Esophagus muscularis mucosa (tissue), 4 donors: ENCODE measurements at regions of chr6 and their contacts with region 1.

Region 1: GRCh38 chr6:117674991-117675657 is at the start of gene NUS1:
- DNase-seq: peak; percentile 99
- H3K4me3 ChIP-seq: peak within 1 kb of the TSS; percentile 63 to 74 (median 70)
- H3K27ac ChIP-seq: peak within 1 kb of the TSS; percentile 80 to 87 (median 84)
- H3K4me1 ChIP-seq: peaks cover 15 to 48% (median 44%) of the 10 kb centered on the region in 4 donors
- H3K27me3 ChIP-seq: no peaks in the 10 kb centered on the region
- CTCF ChIP-seq: peak; percentile 77 to 84 (median 81)
- EP300 ChIP-seq: no peak
- POLR2A ChIP-seq: no peak
- total RNA-seq, gene NUS1: 20.4 to 28.2 (median 22.9) TPM

Region 2: DNA sequence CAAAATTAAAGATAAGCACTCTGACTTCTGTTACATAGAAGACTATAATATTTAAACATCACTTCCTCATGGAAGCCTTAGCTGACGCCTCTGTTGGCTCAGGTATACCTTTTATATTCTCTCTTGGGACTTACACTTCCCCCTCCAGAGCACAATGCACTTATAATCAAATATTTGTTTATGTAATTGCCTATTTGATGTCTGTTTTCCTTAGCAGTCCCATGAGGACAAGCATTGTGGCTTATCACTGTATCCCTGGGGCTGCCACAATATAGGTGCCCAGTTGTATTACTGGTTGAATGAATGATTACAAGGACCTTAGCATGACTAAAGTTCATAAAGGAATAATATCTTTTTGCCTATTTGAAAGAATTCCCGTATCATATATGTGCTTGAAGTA is 596.5 kb before region 1 on chr6:
- intact Hi-C with region 1: no loop called
- DNase-seq: no peak
- H3K4me3 ChIP-seq: no peak overlapping the region
- H3K27ac ChIP-seq: no peak overlapping the region
- H3K4me1 ChIP-seq: no peaks in the 10 kb centered on the region
- H3K27me3 ChIP-seq: peaks cover 0 to 8% (median 0%) of the 10 kb centered on the region in 4 donors
- CTCF ChIP-seq: no peak
- EP300 ChIP-seq: no peak
- POLR2A ChIP-seq: no peak

Region 3: DNA sequence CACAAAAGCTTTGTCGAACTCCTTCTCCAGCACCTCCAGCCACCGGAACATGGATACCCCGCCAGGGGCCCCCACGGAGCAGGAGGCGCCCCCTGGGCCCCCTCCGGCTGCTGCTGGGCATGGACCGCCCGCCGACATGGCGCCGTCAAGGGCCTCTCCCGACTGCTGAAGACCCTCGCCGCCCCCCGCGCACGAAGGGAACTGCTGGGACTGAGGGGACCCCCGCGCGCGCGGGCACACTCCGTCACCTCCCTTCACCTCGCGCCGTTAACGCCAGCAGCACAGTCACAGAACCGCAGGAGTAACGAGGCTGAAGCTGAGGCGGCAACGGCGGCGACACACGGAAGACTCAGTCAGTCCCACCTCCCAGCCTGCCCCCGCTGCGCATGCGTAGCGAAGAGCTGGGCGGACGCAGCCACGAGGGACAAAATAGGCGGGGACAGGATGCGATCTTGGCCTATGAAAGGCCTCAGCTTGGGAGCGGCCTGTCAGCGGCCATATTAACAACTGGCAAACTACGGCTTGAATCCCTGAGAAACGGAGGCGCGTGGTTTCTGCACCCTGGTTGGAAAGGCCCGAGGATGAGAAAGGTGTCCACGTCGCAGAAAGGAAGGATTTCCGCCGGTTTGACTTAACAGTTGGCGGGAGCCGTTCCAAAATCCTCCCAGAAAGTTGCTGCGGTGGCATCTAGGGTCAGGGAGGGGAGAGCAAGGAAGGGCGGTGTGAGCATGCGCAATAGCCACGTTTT is 72.8 kb before region 1 on chr6 and contains the start of gene GOPC:
- intact Hi-C with region 1: loop called (anchors 5 kb)
- DNase-seq: peak; percentile 98
- H3K4me3 ChIP-seq: peak within 1 kb of the TSS; percentile 76 to 97 (median 82)
- H3K27ac ChIP-seq: peak within 1 kb of the TSS; percentile 86 to 93 (median 90)
- H3K4me1 ChIP-seq: peaks cover 21 to 39% (median 29%) of the 10 kb centered on the region in 4 donors
- H3K27me3 ChIP-seq: no peaks in the 10 kb centered on the region
- CTCF ChIP-seq: no peak
- EP300 ChIP-seq: no peak
- POLR2A ChIP-seq: peak; percentile 34
- total RNA-seq, gene GOPC: 18.8 to 25.7 (median 22.8) TPM

Region 4: DNA sequence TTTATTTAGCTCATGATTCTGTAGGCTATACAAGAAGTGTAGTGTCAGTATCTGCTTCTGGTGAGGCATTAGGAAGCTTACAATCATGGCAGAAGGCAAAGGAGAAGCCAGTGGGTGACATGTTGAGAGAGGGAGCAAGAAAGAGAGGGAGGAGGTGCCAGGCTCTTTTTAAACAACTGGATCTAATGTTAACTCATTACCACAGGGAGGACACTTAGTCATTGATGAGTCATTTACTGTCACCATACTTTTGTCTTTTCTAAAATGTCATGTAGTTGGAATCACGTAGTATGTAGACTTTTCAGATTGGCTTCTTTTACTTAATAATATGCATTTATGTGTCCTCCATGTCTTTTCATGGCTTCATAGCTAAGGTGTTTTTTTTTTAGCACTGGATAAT is 58.2 kb after region 1 on chr6:
- intact Hi-C with region 1: no loop called
- DNase-seq: no peak
- H3K4me3 ChIP-seq: no peak overlapping the region
- H3K27ac ChIP-seq: no peak overlapping the region
- H3K4me1 ChIP-seq: no peaks in the 10 kb centered on the region
- H3K27me3 ChIP-seq: no peaks in the 10 kb centered on the region
- CTCF ChIP-seq: no peak
- EP300 ChIP-seq: no peak
- POLR2A ChIP-seq: no peak